HEK293 (cell line): ENCODE measurements at regions of chr10 and their contacts with region 1.

Region 1: DNA sequence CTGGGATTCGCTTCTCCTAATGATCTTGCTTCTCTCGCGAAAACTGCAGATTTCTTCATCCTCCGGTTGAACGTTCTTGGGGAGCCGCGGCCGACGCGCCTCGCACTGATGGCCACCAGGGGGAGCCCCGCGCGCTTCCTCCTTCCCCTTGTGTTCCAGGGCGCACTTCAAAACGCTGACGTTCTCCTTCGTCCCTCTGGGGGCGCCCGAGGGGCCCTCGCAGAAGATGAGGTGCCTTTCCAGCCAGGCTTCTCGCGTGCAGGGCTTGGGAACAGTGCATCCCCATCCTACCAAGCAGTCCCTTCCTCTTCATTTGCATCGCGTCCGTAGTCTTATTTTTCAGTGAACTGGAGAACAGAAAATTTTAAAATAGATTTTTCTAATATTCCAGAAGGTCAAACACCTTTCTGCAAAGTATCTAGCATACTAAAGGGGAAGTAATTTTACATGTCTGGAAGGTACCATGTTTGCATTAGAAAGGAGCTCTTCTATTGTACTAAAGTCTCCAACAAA is 22.5 kb downstream of the GSTO2 start:
- H3K4me3 ChIP-seq: no peak overlapping the region
- H3K27ac ChIP-seq: no peak overlapping the region
- H3K4me1 ChIP-seq: no peaks in the 10 kb centered on the region; the same call in 1 of the 2 replicates
- CTCF ChIP-seq: peak; percentile 98

Region 2: GRCh38 chr10:104274762-104275721 is 16.5 kb before region 1 on chr10:
- CTCF ChIA-PET with region 1: interaction called, 202 read pairs
- POLR2A ChIA-PET with region 1: no interaction called
- H3K4me3 ChIP-seq: peak overlapping the region; percentile 33
- H3K27ac ChIP-seq: no peak overlapping the region
- H3K4me1 ChIP-seq: no peaks in the 10 kb centered on the region
- CTCF ChIP-seq: peak; percentile 86

Region 3: DNA sequence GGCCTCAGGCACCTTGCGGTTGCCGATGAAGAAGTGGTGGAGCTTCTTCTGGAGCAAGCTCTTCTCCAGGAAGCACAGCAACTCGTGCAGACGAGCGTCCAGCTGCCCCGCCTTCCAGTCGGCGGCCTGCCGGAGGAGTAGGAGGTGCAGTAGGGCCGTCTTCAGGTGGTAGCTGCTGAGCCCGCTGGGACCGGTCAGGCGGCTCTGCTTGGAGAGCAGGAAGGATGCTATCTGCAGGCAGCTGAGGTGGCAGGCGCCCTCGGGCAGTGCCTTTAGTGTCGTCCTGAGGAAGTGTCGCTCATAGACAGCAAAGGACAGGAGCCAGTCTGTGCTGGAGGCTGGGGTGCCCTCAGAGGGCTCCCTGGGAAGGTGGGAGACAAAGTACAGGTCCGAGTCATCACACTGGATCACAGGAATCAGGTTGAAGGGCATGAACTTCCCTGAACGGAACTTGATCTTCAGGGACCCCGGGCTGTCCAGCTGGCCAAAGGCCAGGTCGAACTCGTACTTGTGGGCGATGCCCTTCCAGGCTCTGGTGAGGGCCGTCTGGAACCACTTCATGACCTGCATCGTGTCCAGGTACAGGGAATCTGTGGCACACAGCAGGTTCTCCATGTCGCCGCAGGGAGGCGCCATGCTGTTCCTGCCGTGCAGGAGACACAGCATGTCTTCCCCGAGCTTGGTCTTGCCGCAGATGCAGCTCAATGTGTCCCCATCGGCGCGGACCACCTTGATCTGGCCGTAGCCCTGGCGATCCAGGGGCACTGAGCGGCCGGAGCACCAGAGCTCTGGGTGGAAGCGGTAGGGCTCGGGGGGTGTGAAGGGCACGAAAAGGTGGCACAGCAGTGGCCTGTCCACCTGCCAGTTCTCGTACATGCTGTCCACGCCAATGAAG is 23.3 kb after region 1 on chr10:
- CTCF ChIA-PET with region 1: interaction called, 34 read pairs
- POLR2A ChIA-PET with region 1: no interaction called
- H3K4me3 ChIP-seq: no peak overlapping the region
- H3K27ac ChIP-seq: no peak overlapping the region
- H3K4me1 ChIP-seq: no peaks in the 10 kb centered on the region
- CTCF ChIP-seq: no peak

Region 4: GRCh38 chr10:104328896-104329710 is 37.6 kb after region 1 on chr10:
- CTCF ChIA-PET with region 1: interaction called, 13 read pairs
- POLR2A ChIA-PET with region 1: no interaction called
- H3K4me3 ChIP-seq: no peak overlapping the region
- H3K27ac ChIP-seq: peak overlapping the region; percentile 55; the same call in 1 of the 2 replicates
- H3K4me1 ChIP-seq: peaks cover 40% of the 10 kb centered on the region
- CTCF ChIP-seq: no peak

Region 5: GRCh38 chr10:104353325-104354048 is 62.0 kb after region 1 on chr10 and contains the start of gene CFAP58:
- CTCF ChIA-PET with region 1: interaction called, 289 read pairs
- POLR2A ChIA-PET with region 1: interaction called, 3 read pairs
- H3K4me3 ChIP-seq: peak within 1 kb of the TSS; percentile 45
- H3K27ac ChIP-seq: no peak within 1 kb of the TSS
- H3K4me1 ChIP-seq: peaks cover 4% of the 10 kb centered on the region; the same call in 1 of the 2 replicates
- CTCF ChIP-seq: peak; percentile 85